BJ (cell line): ENCODE measurements at regions of chr15 and their contacts with region 1.

Region 1: DNA sequence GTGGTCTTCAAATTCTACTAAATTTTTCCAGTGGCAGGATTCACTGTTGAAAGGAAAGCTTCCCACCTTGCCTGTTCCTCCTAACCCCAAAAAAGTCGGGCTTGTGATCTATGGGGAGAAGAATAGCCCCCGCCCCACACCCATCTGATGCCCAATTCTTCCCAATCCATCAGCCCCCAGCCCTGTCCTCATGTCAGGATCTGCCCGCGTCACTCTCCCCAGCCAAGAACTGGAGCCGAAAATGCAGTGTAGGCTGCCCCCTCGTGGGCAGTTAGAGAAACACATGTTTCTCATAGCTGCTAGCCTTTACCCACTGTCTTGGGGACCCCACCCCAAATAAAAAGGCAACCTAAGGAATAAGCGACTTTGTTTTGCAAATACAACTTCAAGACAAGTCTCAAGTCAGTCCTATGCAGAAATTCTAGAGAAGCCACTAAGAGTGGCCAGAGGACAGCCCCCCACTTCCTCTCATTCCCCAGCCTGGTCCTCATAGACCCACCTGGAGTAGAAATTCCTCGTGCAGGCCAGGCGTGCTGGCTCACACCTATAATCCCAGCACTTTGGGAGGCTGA is 13.0 kb upstream of the CSK start:
- DNase-seq: no peak
- H3K4me3 ChIP-seq: no peak overlapping the region
- H3K27me3 ChIP-seq: peaks cover 3% of the 10 kb centered on the region
- CTCF ChIP-seq: peak; percentile 77

Region 2: GRCh38 chr15:74545880-74546656 is 222.8 kb before region 1 on chr15:
- CTCF ChIA-PET with region 1: no interaction called
- POLR2A ChIA-PET with region 1: no interaction called
- DNase-seq: peak; percentile 97
- H3K4me3 ChIP-seq: no peak overlapping the region
- H3K27me3 ChIP-seq: 0 out of 2 replicates have a peak, but pooled peaks cover 2% of the 10 kb centered on the region
- CTCF ChIP-seq: no peak

Region 3: GRCh38 chr15:74615508-74616365 is 153.1 kb before region 1 on chr15 and contains the start of gene CLK3:
- CTCF ChIA-PET with region 1: interaction called, 11 read pairs
- POLR2A ChIA-PET with region 1: no interaction called
- DNase-seq: peak; percentile 49
- H3K4me3 ChIP-seq: peak within 1 kb of the TSS; percentile 98
- H3K27me3 ChIP-seq: no peaks in the 10 kb centered on the region
- CTCF ChIP-seq: no peak
- polyA plus RNA-seq, gene CLK3: 45.2 and 58.3 TPM in 2 replicates

Region 4: GRCh38 chr15:74752491-74753020 is 16.3 kb before region 1 on chr15:
- CTCF ChIA-PET with region 1: interaction called, 24 read pairs
- POLR2A ChIA-PET with region 1: no interaction called
- DNase-seq: peak; percentile 15
- H3K4me3 ChIP-seq: no peak overlapping the region
- H3K27me3 ChIP-seq: peaks cover 11% of the 10 kb centered on the region
- CTCF ChIP-seq: no peak

Region 5: DNA sequence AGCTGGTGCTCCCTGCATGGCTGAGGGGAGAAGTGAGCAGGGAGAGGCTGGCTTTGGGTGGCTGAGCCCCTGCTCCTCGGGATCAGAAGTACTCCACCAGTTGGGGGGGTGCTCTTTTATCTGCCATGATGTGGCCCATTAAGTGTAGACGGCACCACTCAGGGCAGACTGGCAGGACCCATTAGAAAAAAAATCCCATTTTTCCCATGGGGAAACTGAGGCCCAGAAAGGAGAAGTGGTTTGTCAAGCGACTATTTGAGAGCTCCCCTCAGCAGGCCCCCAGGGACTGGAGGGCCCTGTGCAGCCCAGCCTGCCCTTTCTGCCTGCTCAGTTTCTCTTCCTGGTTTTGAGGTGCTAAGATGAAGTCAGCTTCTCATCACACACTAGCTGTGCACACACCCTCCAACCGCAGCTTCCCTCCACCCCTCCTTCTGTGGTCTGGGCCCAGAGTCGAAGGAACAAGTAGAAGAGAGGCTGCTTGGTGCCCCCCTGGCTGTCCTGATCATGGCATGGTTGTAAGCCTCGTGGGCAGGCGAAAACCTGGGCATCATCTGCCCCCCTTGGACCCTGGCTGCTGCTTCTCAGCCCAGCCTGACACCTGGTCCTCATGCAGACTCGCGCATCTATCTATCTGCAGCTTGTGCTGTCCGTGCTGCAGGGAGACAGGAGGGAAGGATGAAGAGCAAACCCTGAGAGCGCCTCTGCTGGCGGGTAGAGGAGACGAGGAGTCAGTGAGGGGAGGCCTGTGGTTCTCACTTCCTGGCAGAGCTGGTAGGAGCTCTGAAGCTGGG is 18.6 kb after region 1 on chr15:
- CTCF ChIA-PET with region 1: interaction called, 137 read pairs
- POLR2A ChIA-PET with region 1: no interaction called
- DNase-seq: no peak
- H3K4me3 ChIP-seq: no peak overlapping the region
- H3K27me3 ChIP-seq: no peaks in the 10 kb centered on the region
- CTCF ChIP-seq: peak; percentile 71

Region 6: GRCh38 chr15:74799856-74800547 is 31.1 kb after region 1 on chr15:
- CTCF ChIA-PET with region 1: interaction called, 31 read pairs
- POLR2A ChIA-PET with region 1: no interaction called
- DNase-seq: no peak
- H3K4me3 ChIP-seq: no peak overlapping the region
- H3K27me3 ChIP-seq: no peaks in the 10 kb centered on the region
- CTCF ChIP-seq: peak; percentile 99

Region 7: DNA sequence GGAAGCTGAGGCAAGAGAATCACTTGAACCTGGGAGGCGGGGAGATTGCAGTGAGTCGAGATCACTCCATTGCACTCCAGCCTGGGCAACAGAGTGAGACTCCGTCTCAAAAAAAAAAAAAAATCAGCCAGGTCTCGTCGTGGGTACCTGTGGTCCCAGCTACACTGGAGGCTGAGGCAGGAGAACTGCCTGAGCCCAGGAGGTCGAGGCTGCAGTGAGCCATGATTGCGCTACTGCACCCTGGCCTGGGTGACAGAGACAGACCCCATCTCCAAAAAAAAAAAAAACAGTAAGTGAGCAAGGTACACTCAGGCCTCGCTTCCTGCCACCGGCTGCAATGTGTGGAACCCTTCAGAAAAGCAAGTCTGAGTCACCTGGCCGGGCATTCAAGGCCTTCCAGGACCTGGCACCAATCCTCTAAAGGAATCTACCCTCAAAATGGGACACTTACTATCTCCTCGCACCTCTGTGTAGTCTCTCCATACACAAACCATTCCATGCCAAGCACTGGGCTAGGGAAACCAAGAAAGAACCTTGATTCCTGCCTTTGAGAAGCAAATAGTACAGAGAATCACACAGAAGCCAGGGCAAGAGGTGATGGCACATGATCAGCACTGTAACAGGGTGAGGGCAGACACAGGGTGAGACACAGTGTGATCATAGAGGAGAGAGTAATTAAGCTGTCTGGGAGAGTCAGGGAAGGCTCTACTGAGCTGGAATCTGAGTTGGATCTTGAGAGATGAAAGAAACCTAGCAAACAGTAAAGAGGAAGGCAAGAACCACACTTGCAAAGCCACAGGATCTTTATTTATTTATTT is 94.6 kb after region 1 on chr15:
- CTCF ChIA-PET with region 1: no interaction called
- POLR2A ChIA-PET with region 1: no interaction called
- DNase-seq: no peak
- H3K4me3 ChIP-seq: no peak overlapping the region
- H3K27me3 ChIP-seq: no peaks in the 10 kb centered on the region
- CTCF ChIP-seq: no peak

Region 8: DNA sequence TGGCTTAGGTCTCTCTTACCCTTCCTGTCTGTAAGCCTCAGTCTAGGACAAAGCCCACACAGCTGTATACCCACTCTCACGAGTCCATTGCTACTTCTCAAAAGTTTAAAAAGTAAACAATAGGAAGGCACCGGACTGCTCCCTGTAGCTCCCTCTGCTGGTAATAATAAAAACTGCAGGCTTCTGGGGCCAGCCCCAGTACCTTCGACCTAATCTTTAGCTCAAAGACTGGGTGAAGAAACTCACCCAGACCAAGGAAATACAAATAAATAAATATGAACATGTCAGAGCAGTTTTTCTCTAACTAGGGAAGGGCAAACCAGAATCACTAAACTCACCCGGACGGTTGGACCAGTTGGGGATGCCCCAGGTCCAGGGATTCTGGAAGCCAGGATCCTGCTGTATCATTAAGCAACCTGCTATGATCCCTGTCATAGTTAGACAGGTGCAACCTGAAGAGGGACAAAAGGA is 132.8 kb after region 1 on chr15:
- CTCF ChIA-PET with region 1: interaction called, 57 read pairs
- POLR2A ChIA-PET with region 1: no interaction called
- DNase-seq: no peak
- H3K4me3 ChIP-seq: no peak overlapping the region
- H3K27me3 ChIP-seq: no peaks in the 10 kb centered on the region
- CTCF ChIP-seq: peak; percentile 84

Region 9: DNA sequence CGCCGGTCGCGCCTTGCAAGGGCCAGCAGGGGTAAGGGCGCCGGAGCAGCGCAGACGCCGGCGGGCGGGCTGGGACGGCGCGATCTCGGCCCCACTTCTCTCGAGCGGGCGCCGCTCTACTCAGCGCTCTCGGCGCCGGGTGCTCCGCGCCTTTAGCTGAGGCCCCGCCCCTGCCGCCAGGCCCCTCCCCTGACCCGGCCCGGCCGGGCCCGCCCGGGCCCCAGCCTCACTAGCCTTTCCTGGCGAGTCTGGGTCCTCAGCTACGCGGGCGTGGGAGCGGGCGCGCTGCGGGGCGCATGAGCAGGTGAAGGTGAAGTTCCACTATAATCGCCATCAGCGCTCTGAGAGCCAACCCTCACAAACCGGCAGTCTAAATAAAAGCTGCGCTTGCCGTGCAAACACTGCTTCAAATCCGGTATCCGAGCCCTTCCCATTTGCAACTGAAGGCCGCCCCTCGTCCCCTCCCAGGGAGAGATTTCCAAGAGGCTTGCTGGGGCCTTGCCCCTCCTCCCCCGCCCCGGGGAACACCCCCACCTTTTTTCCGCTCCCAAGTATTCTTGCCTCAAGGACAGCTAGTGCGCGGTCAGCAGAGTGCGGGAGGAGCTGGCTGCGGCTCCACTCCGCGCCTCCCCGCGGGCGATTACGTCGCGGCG is 187.9 kb after region 1 on chr15 and contains the start of gene RPP25:
- CTCF ChIA-PET with region 1: interaction called, 205 read pairs
- POLR2A ChIA-PET with region 1: no interaction called
- DNase-seq: no peak
- H3K4me3 ChIP-seq: peak within 1 kb of the TSS; percentile 35
- H3K27me3 ChIP-seq: peaks cover 13% of the 10 kb centered on the region
- CTCF ChIP-seq: no peak
- polyA plus RNA-seq, gene RPP25: 0.92 and 1.3 TPM in 2 replicates

Region 10: GRCh38 chr15:75090388-75090734 is 321.5 kb after region 1 on chr15:
- CTCF ChIA-PET with region 1: no interaction called
- POLR2A ChIA-PET with region 1: no interaction called
- DNase-seq: no peak
- H3K4me3 ChIP-seq: no peak overlapping the region
- H3K27me3 ChIP-seq: no peaks in the 10 kb centered on the region
- CTCF ChIP-seq: no peak